ENCODE measurements at regions of chr2 and their contacts with region 1.

Region 1: DNA sequence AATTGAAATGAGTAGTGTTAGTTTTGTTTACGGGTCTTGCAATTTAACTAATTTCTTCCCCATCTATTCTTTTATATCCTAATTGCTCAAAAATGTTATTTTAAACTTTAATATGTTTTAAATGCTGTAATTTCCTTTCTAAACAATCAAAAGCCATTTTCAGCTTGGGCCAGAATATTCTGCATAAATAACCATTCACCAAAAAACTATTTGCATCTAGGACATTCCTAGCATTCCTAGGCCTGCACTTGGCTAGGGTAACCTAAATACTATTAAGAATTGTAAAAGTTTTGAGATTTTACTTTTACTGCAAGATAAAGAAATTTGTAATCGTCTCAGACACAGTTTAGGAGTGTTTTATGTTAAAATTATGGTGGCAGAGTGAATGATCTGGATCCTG is 7.8 kb upstream of the ETAA1 start:
- DNase-seq: no peak
- ATAC-seq: no peak
- H3K4me3 ChIP-seq: no peak overlapping the region
- H3K4me3 Mint-ChIP-seq: no peak overlapping the region
- H3K27ac ChIP-seq: no peak overlapping the region
- H3K27ac Mint-ChIP-seq: no peak overlapping the region
- H3K4me1 ChIP-seq: no peaks in the 10 kb centered on the region
- H3K4me1 Mint-ChIP-seq: no peaks in the 10 kb centered on the region
- H3K27me3 ChIP-seq: no peaks in the 10 kb centered on the region
- H3K27me3 Mint-ChIP-seq: no peaks in the 10 kb centered on the region
- CTCF ChIP-seq: no peak

Region 2: GRCh38 chr2:67412424-67412823 is 23.1 kb after region 1 on chr2:
- CTCF ChIA-PET with region 1: interaction called, 3 read pairs
- POLR2A ChIA-PET with region 1: no interaction called
- intact Hi-C with region 1: loop called in 1 of 2 experiments (anchors 2 kb)
- DNase-seq: no peak
- ATAC-seq: no peak
- H3K4me3 ChIP-seq: no peak overlapping the region
- H3K4me3 Mint-ChIP-seq: no peak overlapping the region
- H3K27ac ChIP-seq: no peak overlapping the region
- H3K27ac Mint-ChIP-seq: no peak overlapping the region
- H3K4me1 ChIP-seq: no peaks in the 10 kb centered on the region
- H3K4me1 Mint-ChIP-seq: no peaks in the 10 kb centered on the region
- H3K27me3 ChIP-seq: no peaks in the 10 kb centered on the region
- H3K27me3 Mint-ChIP-seq: no peaks in the 10 kb centered on the region
- CTCF ChIP-seq: no peak

Measured in CD4-positive, alpha-beta T cell (primary cell).